Left lung (tissue), 14 donors: ENCODE measurements at regions of chr21 and their contacts with region 1.

Region 1: GRCh38 chr21:15729674-15730483 is at the start of gene USP25:
- DNase-seq: peak; percentile 79 to 99 (median 91)
- ATAC-seq: peak; percentile 96
- H3K4me3 ChIP-seq: peak within 1 kb of the TSS; percentile 75 to 86
- H3K27ac ChIP-seq: peak within 1 kb of the TSS; percentile 92 to 97
- H3K4me1 ChIP-seq: peaks cover 0 to 44% of the 10 kb centered on the region in 2 donors
- H3K27me3 ChIP-seq: no peaks in the 10 kb centered on the region
- CTCF ChIP-seq: no peak
- polyA plus RNA-seq, gene USP25: 37.2 to 50.1 (median 41.8) TPM

Region 2: DNA sequence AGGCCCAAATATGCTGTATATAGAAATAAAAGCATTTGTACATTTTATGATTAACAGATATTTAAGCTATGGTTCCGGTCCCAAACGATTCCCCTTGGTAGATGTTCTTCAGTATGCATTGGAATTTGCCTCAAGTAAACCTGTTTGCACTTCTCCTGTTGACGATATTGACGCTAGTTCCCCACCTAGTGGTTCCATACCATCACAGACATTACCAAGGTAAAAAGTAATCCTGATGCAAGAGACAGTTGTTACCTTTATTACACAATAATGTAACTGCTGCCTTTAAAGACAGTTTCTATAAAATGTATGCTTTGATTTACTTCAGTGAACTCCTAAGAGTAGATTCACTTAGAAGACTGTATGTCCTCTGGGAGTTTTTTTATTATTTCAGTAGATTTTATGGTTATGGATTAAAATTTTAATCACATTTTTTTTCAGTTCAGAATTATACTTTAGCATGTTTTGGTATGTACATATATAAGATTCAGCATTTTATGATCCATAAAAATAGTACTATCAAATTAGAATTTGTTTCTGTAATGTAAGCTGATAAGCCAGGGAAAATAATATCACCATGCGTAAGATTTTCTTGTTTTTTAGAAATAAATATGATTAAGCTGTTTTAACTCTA is 96.4 kb after region 1 on chr21:
- intact Hi-C with region 1: loop called in 1 of 2 experiments (anchors 5 kb)
- DNase-seq: peak in 1 of 4 donors; percentile 33
- ATAC-seq: peak; percentile 92
- H3K4me3 ChIP-seq: no peak overlapping the region
- H3K27ac ChIP-seq: no peak overlapping the region
- H3K4me1 ChIP-seq: peaks cover 0 to 6% of the 10 kb centered on the region in 2 donors
- H3K27me3 ChIP-seq: no peaks in the 10 kb centered on the region
- CTCF ChIP-seq: peak; percentile 47 to 57